ENCODE measurements at regions of chr12 and their contacts with region 1.

Region 1: GRCh38 chr12:30985814-30986452 is 59.4 kb downstream of the TSPAN11 start:
- DNase-seq: peak; percentile 30 to 46 (median 38)
- ATAC-seq: peak; percentile 74
- H3K4me3 ChIP-seq: no peak overlapping the region
- H3K27ac ChIP-seq: no peak overlapping the region
- H3K4me1 ChIP-seq: no peaks in the 10 kb centered on the region
- H3K27me3 ChIP-seq: peaks cover 11 to 81% of the 10 kb centered on the region in 2 experiments; a peak in 4 of 5 replicates
- CTCF ChIP-seq: peak; percentile 51 to 64 (median 57)
- EP300 ChIP-seq: no peak
- POLR2A ChIP-seq: no peak
- RAD21 ChIP-seq: peak in 1 of 2 experiments; percentile 54; a peak in 1 of 4 replicates

Region 2: GRCh38 chr12:30847259-30847658 is 138.7 kb before region 1 on chr12:
- CTCF ChIA-PET with region 1: interaction called, 4 read pairs
- POLR2A ChIA-PET with region 1: no interaction called
- in situ Hi-C with region 1: no loop called
- intact Hi-C with region 1: loop called (anchors 5 kb)
- DNase-seq: peak in 3 of 4 experiments; percentile 37 to 81 (median 40)
- ATAC-seq: peak; percentile 65
- H3K4me3 ChIP-seq: no peak overlapping the region
- H3K27ac ChIP-seq: no peak overlapping the region
- H3K4me1 ChIP-seq: peaks cover 0 to 2% of the 10 kb centered on the region in 2 experiments; a peak in 3 of 5 replicates
- H3K27me3 ChIP-seq: peaks cover 6 to 13% of the 10 kb centered on the region in 2 experiments; a peak in 4 of 5 replicates
- CTCF ChIP-seq: peak; percentile 66 to 83 (median 70)
- EP300 ChIP-seq: no peak
- POLR2A ChIP-seq: no peak
- RAD21 ChIP-seq: peak; percentile 86 to 96

Region 3: GRCh38 chr12:31702047-31702446 is 716.1 kb after region 1 on chr12:
- CTCF ChIA-PET with region 1: no interaction called
- POLR2A ChIA-PET with region 1: no interaction called
- in situ Hi-C with region 1: no loop called
- intact Hi-C with region 1: no loop called
- DNase-seq: no peak
- ATAC-seq: peak; percentile 61
- H3K4me3 ChIP-seq: no peak overlapping the region
- H3K27ac ChIP-seq: no peak overlapping the region
- H3K4me1 ChIP-seq: no peaks in the 10 kb centered on the region
- H3K27me3 ChIP-seq: no peaks in the 10 kb centered on the region
- CTCF ChIP-seq: peak in 2 of 3 experiments; percentile 5 to 33; a peak in 2 of 6 replicates
- EP300 ChIP-seq: no peak
- POLR2A ChIP-seq: no peak
- RAD21 ChIP-seq: peak in 1 of 2 experiments; percentile 48; a peak in 2 of 4 replicates

Measured in K562 (cell line).